WTC11 (cell line): ENCODE measurements at regions of chr10 and their contacts with region 1.

Region 1: GRCh38 chr10:100621360-100622205 is 85.8 kb downstream of the HIF1AN start:
- DNase-seq: no peak
- ATAC-seq: no peak
- H3K4me3 Mint-ChIP-seq: no peak overlapping the region
- H3K27ac Mint-ChIP-seq: no peak overlapping the region
- H3K4me1 Mint-ChIP-seq: peaks cover 23% of the 10 kb centered on the region
- H3K27me3 Mint-ChIP-seq: peaks cover 11% of the 10 kb centered on the region
- CTCF ChIP-seq: no peak

Region 2: DNA sequence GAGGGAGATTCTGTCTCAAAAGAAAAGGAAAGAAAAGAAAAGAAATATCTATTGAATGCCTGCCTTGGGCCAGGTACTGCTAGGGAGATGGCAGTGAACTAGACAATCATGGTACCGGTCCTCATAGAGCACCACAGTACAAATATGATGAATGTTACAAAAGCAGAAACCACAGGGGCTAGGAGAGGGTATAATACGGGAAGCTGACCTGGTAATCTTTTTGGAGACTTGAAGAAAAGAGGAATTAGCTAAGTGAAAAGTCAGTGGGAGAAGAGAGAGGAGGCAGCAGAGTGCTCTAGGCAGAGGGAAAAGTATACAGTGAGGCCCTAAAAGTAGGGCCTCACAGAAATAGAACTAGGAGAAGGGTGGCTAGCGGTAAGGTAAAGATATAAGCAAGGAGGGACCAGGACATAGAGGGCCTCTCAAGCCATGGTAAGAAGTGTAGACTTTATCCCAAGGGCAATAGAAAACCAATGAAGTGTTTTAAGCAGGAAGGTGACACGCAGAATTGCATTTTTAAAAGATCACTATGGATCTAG is 201.6 kb before region 1 on chr10:
- CTCF ChIA-PET with region 1: no interaction called
- POLR2A ChIA-PET with region 1: no interaction called
- DNase-seq: no peak
- ATAC-seq: no peak
- H3K4me3 Mint-ChIP-seq: no peak overlapping the region
- H3K27ac Mint-ChIP-seq: no peak overlapping the region
- H3K4me1 Mint-ChIP-seq: no peaks in the 10 kb centered on the region
- H3K27me3 Mint-ChIP-seq: peaks cover 8% of the 10 kb centered on the region
- CTCF ChIP-seq: no peak

Region 3: DNA sequence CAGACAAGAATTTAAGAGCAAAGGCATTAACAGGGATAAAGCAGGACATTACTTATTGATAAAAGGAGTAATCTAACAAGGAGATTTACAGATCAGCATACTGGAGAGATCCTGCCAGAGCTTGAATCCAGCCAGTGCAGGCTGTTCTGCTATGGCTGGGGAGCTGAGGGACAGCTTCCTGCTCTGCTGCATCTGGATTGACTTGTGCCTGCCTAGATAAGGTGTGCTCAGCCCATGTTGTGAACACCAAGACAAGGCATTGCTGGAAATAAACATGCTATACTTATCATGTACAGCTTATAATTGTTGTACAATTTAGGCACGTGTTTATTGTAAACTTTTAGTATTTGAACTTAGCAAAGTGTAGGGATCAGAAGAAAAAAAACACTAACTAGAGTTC is 14.1 kb before region 1 on chr10:
- CTCF ChIA-PET with region 1: no interaction called
- POLR2A ChIA-PET with region 1: no interaction called
- DNase-seq: no peak
- ATAC-seq: no peak
- H3K4me3 Mint-ChIP-seq: no peak overlapping the region
- H3K27ac Mint-ChIP-seq: no peak overlapping the region
- H3K4me1 Mint-ChIP-seq: no peaks in the 10 kb centered on the region
- H3K27me3 Mint-ChIP-seq: peaks cover 48% of the 10 kb centered on the region
- CTCF ChIP-seq: no peak

Region 4: GRCh38 chr10:100637785-100638184 is 16.2 kb after region 1 on chr10:
- CTCF ChIA-PET with region 1: interaction called, 37 read pairs
- POLR2A ChIA-PET with region 1: no interaction called
- DNase-seq: peak; percentile 87
- ATAC-seq: peak; percentile 88
- H3K4me3 Mint-ChIP-seq: peak overlapping the region; percentile 29
- H3K27ac Mint-ChIP-seq: no peak overlapping the region
- H3K4me1 Mint-ChIP-seq: peaks cover 35% of the 10 kb centered on the region
- H3K27me3 Mint-ChIP-seq: peaks cover 14% of the 10 kb centered on the region
- CTCF ChIP-seq: peak; percentile 76

Region 5: DNA sequence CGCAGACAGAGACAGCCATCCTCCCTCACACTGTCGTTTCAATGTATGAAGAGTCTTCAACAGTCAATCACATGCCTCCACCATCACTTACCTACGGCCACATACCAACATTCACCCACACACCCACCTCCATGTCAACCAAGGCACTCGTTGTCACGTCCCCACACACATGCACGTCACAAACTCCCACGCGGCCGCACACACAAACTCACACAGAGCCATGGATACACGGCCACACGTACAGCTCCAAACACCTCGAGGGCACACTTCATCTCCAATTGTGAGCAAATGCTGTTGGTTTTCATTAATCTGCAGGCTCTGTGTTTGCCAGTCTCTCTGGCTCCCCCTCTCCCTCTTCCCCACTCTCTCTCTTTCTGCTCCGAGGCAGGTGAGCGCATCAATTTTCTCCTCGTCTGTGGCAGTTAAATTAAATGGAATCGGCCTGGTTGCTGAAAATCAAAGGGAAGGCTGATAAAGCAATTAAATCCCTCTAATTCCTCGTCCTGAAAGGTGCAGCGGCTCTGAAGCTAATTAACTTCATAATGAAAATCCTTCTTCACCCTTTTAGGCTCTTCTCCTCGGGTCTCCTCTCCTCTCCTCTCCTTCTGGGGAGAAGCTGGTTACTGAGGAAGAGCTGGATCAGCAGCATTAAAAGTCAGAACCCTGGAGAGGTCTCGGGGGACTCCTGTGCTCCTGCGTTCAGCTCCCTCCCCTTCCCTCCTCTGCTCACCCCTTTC is 237.3 kb after region 1 on chr10:
- CTCF ChIA-PET with region 1: no interaction called
- POLR2A ChIA-PET with region 1: no interaction called
- DNase-seq: no peak
- ATAC-seq: no peak
- H3K4me3 Mint-ChIP-seq: no peak overlapping the region
- H3K27ac Mint-ChIP-seq: no peak overlapping the region
- H3K4me1 Mint-ChIP-seq: no peaks in the 10 kb centered on the region
- H3K27me3 Mint-ChIP-seq: peaks cover 67% of the 10 kb centered on the region
- CTCF ChIP-seq: no peak